ENCODE measurements at regions of chr12 and their contacts with region 1.

Region 1: GRCh38 chr12:49673446-49674317 is 33.5 kb downstream of the FMNL3 start:
- DNase-seq: peak; percentile 89
- H3K4me3 ChIP-seq: peak overlapping the region in 1 of 2 experiments; percentile 46; a peak in 2 of 4 replicates
- H3K27ac ChIP-seq: peak overlapping the region; percentile 96 to 98
- H3K4me1 ChIP-seq: peaks cover 34 to 49% of the 10 kb centered on the region in 2 experiments
- H3K27me3 ChIP-seq: no peaks in the 10 kb centered on the region
- CTCF ChIP-seq: peak; percentile 44
- EP300 ChIP-seq: peak; percentile 17 to 43; a peak in 2 of 4 replicates
- RAD21 ChIP-seq: no peak

Region 2: DNA sequence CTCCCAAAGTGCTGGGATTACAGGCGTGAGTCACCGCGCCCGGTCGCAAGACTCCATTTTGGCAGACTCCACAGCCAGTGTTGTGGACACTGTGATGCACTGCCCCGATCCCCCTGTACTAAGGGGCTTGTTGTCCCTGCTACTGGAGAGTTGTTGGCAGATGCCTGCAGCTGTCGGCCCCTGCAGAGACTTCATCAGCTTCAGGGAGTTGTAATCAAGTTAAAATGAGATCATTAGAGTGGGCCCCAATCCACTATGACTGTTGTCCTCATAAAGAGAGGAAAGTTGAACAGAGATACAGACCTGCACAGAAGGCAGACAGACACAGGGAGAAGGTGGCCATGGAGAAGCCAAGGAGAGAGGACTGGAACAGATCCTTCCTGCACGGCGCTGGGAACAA is 461.1 kb before region 1 on chr12:
- CTCF ChIA-PET with region 1: no interaction called
- POLR2A ChIA-PET with region 1: no interaction called
- DNase-seq: no peak
- H3K4me3 ChIP-seq: no peak overlapping the region
- H3K27ac ChIP-seq: no peak overlapping the region
- H3K4me1 ChIP-seq: peaks cover 9 to 18% of the 10 kb centered on the region in 2 experiments; a peak in 3 of 4 replicates
- H3K27me3 ChIP-seq: no peaks in the 10 kb centered on the region
- CTCF ChIP-seq: no peak
- EP300 ChIP-seq: no peak
- RAD21 ChIP-seq: no peak

Region 3: GRCh38 chr12:49342066-49342913 is 331.4 kb before region 1 on chr12:
- CTCF ChIA-PET with region 1: no interaction called
- POLR2A ChIA-PET with region 1: no interaction called
- DNase-seq: peak; percentile 96
- H3K4me3 ChIP-seq: peak overlapping the region; percentile 37 to 52
- H3K27ac ChIP-seq: no peak overlapping the region
- H3K4me1 ChIP-seq: peaks cover 14 to 39% of the 10 kb centered on the region in 2 experiments; a peak in 2 of 4 replicates
- H3K27me3 ChIP-seq: peaks cover 5% of the 10 kb centered on the region; the same call in 1 of the 2 replicates
- CTCF ChIP-seq: peak; percentile 95
- EP300 ChIP-seq: no peak
- RAD21 ChIP-seq: peak; percentile 71

Region 4: GRCh38 chr12:49369411-49370145 is 304.1 kb before region 1 on chr12:
- CTCF ChIA-PET with region 1: no interaction called
- POLR2A ChIA-PET with region 1: no interaction called
- DNase-seq: peak; percentile 44
- H3K4me3 ChIP-seq: peak overlapping the region; percentile 79 to 91; a peak in 3 of 4 replicates
- H3K27ac ChIP-seq: peak overlapping the region in 1 of 2 experiments; percentile 42; a peak in 3 of 4 replicates
- H3K4me1 ChIP-seq: peaks cover 3 to 6% of the 10 kb centered on the region in 2 experiments; a peak in 3 of 4 replicates
- H3K27me3 ChIP-seq: no peaks in the 10 kb centered on the region
- CTCF ChIP-seq: peak; percentile 48
- EP300 ChIP-seq: no peak
- RAD21 ChIP-seq: peak; percentile 14; the same call in 1 of the 2 replicates

Region 5: GRCh38 chr12:49644620-49644994 is 29.1 kb before region 1 on chr12:
- CTCF ChIA-PET with region 1: interaction called, 11 read pairs
- POLR2A ChIA-PET with region 1: interaction called, 4 read pairs
- DNase-seq: peak; percentile 91
- H3K4me3 ChIP-seq: no peak overlapping the region
- H3K27ac ChIP-seq: peak overlapping the region in 1 of 2 experiments; percentile 6; a peak in 1 of 4 replicates
- H3K4me1 ChIP-seq: peaks cover 0 to 5% of the 10 kb centered on the region in 2 experiments; a peak in 1 of 4 replicates
- H3K27me3 ChIP-seq: no peaks in the 10 kb centered on the region
- CTCF ChIP-seq: peak; percentile 98
- EP300 ChIP-seq: no peak
- RAD21 ChIP-seq: peak; percentile 98

Region 6: GRCh38 chr12:49662998-49663843 is 10.5 kb before region 1 on chr12:
- CTCF ChIA-PET with region 1: interaction called, 22 read pairs
- POLR2A ChIA-PET with region 1: interaction called, 12 read pairs
- DNase-seq: peak; percentile 50
- H3K4me3 ChIP-seq: no peak overlapping the region; a peak in 1 of 4 replicates
- H3K27ac ChIP-seq: peak overlapping the region; percentile 89 to 91
- H3K4me1 ChIP-seq: peaks cover 20 to 29% of the 10 kb centered on the region in 2 experiments; a peak in 3 of 4 replicates
- H3K27me3 ChIP-seq: no peaks in the 10 kb centered on the region
- CTCF ChIP-seq: no peak
- EP300 ChIP-seq: peak in 1 of 2 experiments; percentile 61; a peak in 1 of 4 replicates
- RAD21 ChIP-seq: no peak

Region 7: DNA sequence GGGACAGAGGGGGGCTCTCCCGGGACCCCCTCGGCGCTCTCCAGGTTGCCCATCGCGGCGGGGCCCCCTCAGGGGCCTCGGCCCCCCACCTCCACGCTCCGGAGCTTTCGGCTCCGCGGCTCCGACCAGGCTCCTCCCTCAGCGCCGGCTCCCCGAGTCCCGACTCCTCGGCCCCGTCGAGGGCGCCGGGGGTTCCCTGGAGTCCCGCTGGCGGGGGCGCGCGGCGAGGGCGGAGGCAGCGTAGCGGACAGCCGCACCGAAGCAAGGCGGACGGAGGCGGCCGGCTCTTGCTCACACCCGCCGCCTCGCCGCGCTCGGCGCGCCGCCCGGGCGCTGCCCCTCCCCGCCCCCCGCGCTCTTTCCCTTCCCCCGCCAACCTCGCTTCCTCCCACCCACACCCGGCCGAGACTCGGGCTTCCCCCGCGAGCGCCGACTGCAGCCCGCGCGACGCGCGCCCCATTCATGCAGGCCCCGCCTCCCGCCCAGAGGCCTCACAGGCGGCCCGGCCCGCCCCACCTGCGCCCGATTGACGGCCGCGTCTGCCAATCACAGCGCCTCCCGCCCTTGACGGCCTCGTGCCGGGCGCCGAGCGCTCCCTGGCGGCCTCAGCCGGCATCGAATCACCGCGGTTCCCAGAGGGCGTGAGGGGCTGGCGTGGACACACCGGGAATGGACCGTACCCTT is 33.6 kb after region 1 on chr12 and contains the start of gene FMNL3:
- CTCF ChIA-PET with region 1: interaction called, 29 read pairs
- POLR2A ChIA-PET with region 1: interaction called, 20 read pairs
- DNase-seq: peak; percentile 99
- H3K4me3 ChIP-seq: peak within 1 kb of the TSS; percentile 83 to 96
- H3K27ac ChIP-seq: peak within 1 kb of the TSS; percentile 79 to 88
- H3K4me1 ChIP-seq: peaks cover 25 to 28% of the 10 kb centered on the region in 2 experiments; a peak in 3 of 4 replicates
- H3K27me3 ChIP-seq: no peaks in the 10 kb centered on the region
- CTCF ChIP-seq: peak; percentile 93
- EP300 ChIP-seq: 0 out of 4 replicates have a peak, but pooled peaks of 1 of the 2 experiments have one; percentile 25
- RAD21 ChIP-seq: peak; percentile 95
- polyA plus RNA-seq, gene FMNL3: 10.2 and 13.1 TPM in 2 replicates

Region 8: DNA sequence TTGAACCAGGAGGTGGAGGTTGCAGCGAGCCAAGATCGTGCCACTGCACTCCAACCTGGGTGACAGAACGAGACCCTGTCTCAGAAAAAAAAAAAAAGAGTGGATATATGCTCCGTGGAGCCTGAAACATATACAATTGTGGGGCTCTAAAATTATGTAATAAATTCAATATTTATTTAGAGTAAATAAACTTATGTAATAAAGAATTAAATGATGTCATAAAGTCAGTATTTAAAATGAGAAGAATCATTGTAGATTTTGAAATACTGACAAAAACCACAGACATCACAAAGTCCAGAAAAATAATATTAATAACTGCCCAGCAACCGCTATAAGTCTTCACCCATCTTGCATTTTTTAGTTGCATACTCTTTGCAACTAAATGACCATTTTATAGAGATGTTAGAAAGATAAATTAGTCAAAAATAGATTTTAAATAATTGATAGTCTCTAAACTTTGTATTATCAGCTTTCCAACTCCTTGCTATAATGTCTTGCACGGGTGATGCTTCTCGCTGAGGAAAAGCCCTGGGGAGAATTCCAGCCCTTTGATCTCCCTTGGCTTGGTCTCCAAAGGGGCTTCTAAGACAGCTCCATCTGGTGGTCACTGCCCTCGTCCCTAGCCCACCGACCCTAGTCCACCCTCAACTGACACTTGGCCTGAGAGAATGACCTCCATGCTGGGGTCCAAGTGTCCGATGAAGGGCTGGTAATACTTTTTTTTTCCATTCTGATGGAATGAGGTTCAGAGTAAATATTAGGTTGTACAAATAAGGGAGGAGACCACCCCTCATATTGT is 59.7 kb after region 1 on chr12:
- CTCF ChIA-PET with region 1: no interaction called
- POLR2A ChIA-PET with region 1: no interaction called
- DNase-seq: no peak
- H3K4me3 ChIP-seq: no peak overlapping the region
- H3K27ac ChIP-seq: no peak overlapping the region
- H3K4me1 ChIP-seq: no peaks in the 10 kb centered on the region
- H3K27me3 ChIP-seq: no peaks in the 10 kb centered on the region
- CTCF ChIP-seq: peak; percentile 13; the same call in 1 of the 2 replicates
- EP300 ChIP-seq: no peak
- RAD21 ChIP-seq: no peak